Body of pancreas (tissue), 4 donors: ENCODE measurements at regions of chr2 and their contacts with region 1.

Region 1: DNA sequence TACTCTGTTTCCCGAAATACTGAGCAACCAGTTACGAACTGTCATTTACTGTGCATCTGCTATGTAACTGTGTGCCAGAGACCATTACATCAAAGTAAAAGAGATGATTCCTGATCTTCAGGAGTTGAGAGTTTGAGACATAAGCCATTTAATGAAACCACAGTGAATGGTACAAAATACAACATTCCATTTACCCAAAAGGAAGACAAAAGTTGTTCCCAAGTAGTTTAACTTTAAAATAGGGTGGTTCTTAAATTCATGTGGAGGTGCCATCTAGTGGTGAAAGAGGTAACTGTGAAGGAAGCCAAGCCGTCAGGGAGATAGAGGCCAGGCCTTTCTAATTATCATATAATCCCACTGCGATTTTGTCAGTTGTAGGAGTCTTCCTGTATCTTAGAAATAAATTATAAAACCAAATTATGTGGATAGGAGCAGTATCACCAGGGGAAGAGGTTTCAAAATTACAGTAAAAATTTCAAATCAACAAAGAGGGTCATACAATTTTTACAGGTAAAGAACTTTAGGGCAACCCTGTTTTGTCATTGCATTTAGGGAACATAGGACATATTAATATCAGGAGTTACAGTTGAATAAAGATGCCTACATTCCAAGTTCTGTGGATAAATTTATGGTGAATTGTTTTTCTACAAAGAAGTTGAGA is 67.7 kb downstream of the EPAS1 start:
- DNase-seq: peak; percentile 43 to 61 (median 58)
- ATAC-seq: peak; percentile 75
- H3K4me3 ChIP-seq: no peak overlapping the region
- H3K27ac ChIP-seq: no peak overlapping the region
- H3K4me1 ChIP-seq: no peaks in the 10 kb centered on the region
- H3K27me3 ChIP-seq: no peaks in the 10 kb centered on the region
- CTCF ChIP-seq: peak; percentile 47 to 88 (median 83)
- POLR2A ChIP-seq: no peak

Region 2: GRCh38 chr2:46050489-46050888 is 314.4 kb before region 1 on chr2:
- intact Hi-C with region 1: loop called (anchors 10 kb)
- DNase-seq: peak in 1 of 4 donors; percentile 16
- ATAC-seq: no peak
- H3K4me3 ChIP-seq: no peak overlapping the region
- H3K27ac ChIP-seq: no peak overlapping the region
- H3K4me1 ChIP-seq: no peaks in the 10 kb centered on the region
- H3K27me3 ChIP-seq: no peaks in the 10 kb centered on the region
- CTCF ChIP-seq: peak in 6 of 7 experiments; percentile 11 to 35 (median 18)
- POLR2A ChIP-seq: no peak

Region 3: GRCh38 chr2:46198154-46198853 is 166.6 kb before region 1 on chr2:
- intact Hi-C with region 1: no loop called
- DNase-seq: no peak
- ATAC-seq: no peak
- H3K4me3 ChIP-seq: no peak overlapping the region
- H3K27ac ChIP-seq: no peak overlapping the region
- H3K4me1 ChIP-seq: no peaks in the 10 kb centered on the region
- H3K27me3 ChIP-seq: no peaks in the 10 kb centered on the region
- CTCF ChIP-seq: no peak
- POLR2A ChIP-seq: no peak

Region 4: DNA sequence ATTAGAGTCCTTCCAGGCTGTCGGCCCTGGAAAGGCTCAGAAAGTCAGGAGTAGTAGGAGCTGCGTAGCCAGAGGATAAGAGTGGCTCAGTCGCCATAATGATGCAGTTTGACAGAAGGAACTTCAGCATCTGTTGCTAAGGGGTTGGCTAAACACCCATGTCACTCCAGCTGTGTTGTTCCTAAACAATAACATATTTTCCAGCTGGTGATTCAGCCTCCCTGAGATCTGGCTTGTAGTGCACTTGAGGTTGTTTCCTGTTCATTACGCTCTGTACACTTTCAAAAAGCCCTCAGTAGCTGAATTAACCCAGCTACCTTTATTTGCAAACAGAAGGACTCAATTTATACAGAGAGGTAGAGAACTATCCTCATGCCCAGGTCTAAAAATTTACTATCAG is 107.5 kb before region 1 on chr2:
- intact Hi-C with region 1: no loop called
- DNase-seq: no peak
- ATAC-seq: no peak
- H3K4me3 ChIP-seq: no peak overlapping the region
- H3K27ac ChIP-seq: no peak overlapping the region
- H3K4me1 ChIP-seq: peaks cover 8% of the 10 kb centered on the region
- H3K27me3 ChIP-seq: no peaks in the 10 kb centered on the region
- CTCF ChIP-seq: no peak
- POLR2A ChIP-seq: no peak

Region 5: GRCh38 chr2:46296840-46297545 is 67.9 kb before region 1 on chr2 and contains the start of gene EPAS1:
- intact Hi-C with region 1: loop called (anchors 10 kb)
- DNase-seq: peak; percentile 91 to 94 (median 92)
- ATAC-seq: peak; percentile 83
- H3K4me3 ChIP-seq: peak within 1 kb of the TSS; percentile 52 to 70
- H3K27ac ChIP-seq: peak within 1 kb of the TSS; percentile 90 to 96 (median 96)
- H3K4me1 ChIP-seq: peaks cover 37% of the 10 kb centered on the region
- H3K27me3 ChIP-seq: no peaks in the 10 kb centered on the region
- CTCF ChIP-seq: peak in 1 of 7 experiments; percentile 14
- POLR2A ChIP-seq: peak in 2 of 3 donors; percentile 72 to 86
- total RNA-seq, gene EPAS1: 58.4 to 162 TPM

Region 6: DNA sequence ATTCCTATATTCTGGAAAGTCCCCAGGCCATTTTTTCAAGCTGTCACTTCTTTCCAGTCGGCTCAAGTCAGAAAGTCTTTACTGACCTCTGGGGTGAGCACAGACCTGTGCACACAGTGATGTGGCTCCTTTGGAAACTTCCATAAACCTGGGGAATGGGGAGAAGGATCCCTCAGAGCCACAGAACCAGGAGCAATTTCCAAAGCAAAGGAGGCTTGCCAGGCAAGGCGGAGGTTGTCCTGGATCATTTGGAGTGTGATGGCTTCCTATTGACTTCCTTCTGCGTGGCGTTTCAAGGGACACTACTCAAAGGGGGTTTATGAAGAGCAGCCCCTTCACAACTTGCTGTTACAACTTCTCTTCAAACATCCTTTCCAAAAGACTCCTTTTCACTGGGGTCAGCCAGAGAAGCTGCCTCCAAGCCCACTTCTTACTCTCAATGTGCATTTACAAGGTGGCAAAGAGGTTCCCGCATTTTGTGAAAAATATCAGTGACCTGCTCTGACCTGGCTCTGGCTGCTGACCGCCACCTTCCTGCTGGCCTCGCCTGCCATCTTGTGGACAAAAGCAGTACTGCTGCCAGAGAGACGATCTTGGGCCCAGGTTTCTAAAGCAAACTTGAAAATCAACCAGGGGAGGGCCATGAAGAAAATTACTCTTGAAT is 96.2 kb after region 1 on chr2:
- intact Hi-C with region 1: no loop called
- DNase-seq: peak; percentile 77 to 89 (median 82)
- ATAC-seq: peak; percentile 82
- H3K4me3 ChIP-seq: no peak overlapping the region
- H3K27ac ChIP-seq: peak overlapping the region in 3 of 4 donors; percentile 50 to 67 (median 66)
- H3K4me1 ChIP-seq: peaks cover 18% of the 10 kb centered on the region
- H3K27me3 ChIP-seq: no peaks in the 10 kb centered on the region
- CTCF ChIP-seq: peak; percentile 96 to 99 (median 98)
- POLR2A ChIP-seq: no peak

Region 7: DNA sequence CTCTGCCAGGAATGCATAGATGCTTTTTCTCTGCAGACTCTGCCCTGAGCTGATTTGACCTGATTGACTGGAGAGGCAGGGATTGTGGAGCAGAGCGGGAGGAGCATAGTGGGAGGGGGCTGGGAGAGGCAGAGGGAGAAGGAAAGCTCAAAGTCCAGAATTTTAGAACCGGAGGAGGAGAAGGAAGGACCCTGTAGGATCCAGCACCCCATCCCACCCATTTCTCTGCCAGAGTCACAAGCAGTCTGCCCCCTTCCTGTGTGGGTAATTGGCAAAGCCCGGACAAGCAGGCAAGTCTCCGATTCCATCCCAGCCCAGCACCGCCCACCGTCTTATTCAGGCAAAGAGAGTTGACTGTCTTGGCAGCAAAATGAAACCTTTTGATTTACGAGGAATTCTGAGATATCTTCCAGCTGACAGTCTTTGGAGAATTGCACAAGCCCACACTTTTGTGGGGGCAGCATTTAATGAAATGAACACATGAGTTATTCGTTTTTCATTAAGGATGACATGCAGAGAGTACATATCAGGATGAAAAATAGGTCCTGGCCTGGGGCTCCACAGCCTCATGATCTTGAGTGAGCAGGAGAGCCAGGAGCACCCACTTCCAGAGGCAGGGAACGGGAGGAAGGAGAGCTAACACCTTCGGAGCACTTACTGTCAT is 447.6 kb after region 1 on chr2:
- intact Hi-C with region 1: no loop called
- DNase-seq: peak in 2 of 4 donors; percentile 19 to 32
- ATAC-seq: peak; percentile 43
- H3K4me3 ChIP-seq: no peak overlapping the region
- H3K27ac ChIP-seq: peak overlapping the region in 2 of 4 donors; percentile 3 to 17
- H3K4me1 ChIP-seq: no peaks in the 10 kb centered on the region
- H3K27me3 ChIP-seq: no peaks in the 10 kb centered on the region
- CTCF ChIP-seq: no peak
- POLR2A ChIP-seq: no peak